OCI-LY7 (cell line): ENCODE measurements at regions of chr2 and their contacts with region 1.

Region 1: DNA sequence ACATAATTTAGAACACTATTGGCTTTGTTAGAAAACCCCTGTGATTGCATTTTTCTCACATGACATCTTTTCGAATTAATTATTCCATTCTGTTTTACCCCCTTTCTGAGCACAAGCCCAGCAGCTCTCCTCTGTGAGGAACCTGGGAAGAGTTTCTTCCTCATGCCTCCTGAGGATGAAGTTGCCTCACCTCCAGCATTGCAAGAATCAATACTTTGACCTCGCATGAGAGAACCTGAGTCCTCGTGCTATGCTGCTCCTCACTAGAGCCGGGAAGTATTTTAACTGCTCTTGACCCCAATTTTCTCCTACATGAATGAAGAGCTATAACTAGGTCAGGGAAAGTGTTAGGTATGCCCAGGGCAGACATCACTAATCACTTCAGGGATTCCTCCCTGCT is 77.2 kb upstream of the RAPH1 start:
- DNase-seq: no peak
- H3K4me3 ChIP-seq: no peak overlapping the region
- H3K27ac ChIP-seq: no peak overlapping the region
- H3K4me1 ChIP-seq: peaks cover 13% of the 10 kb centered on the region
- CTCF ChIP-seq: no peak

Region 2: GRCh38 chr2:203549406-203549805 is 62.9 kb before region 1 on chr2:
- CTCF ChIA-PET with region 1: interaction called, 16 read pairs
- POLR2A ChIA-PET with region 1: interaction called, 4 read pairs
- intact Hi-C with region 1: no loop called
- DNase-seq: no peak
- H3K4me3 ChIP-seq: no peak overlapping the region
- H3K27ac ChIP-seq: no peak overlapping the region
- H3K4me1 ChIP-seq: no peaks in the 10 kb centered on the region
- CTCF ChIP-seq: no peak

Region 3: DNA sequence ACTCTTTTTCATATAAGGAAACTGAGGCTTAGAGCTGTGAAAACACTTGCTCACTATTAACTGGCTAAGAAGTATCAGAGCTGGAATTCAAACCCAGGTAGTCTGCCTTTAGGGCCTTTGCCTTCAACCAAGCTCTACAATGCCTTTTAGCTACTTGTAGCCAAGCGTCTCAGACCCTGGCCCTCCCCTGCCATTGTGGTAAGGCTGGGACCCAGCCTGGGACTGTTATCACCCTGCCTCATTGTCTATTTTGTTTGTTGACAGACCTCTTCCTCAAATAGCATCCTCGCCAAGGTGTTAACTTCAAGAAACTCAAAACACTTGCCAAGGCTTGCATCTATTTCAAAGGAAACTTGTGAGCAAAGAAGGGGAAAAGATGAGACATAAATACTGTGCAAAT is 17.4 kb after region 1 on chr2:
- CTCF ChIA-PET with region 1: no interaction called
- POLR2A ChIA-PET with region 1: interaction called, 11 read pairs
- intact Hi-C with region 1: no loop called
- DNase-seq: no peak
- H3K4me3 ChIP-seq: no peak overlapping the region
- H3K27ac ChIP-seq: no peak overlapping the region
- H3K4me1 ChIP-seq: no peaks in the 10 kb centered on the region
- CTCF ChIP-seq: no peak